ENCODE measurements at regions of chr3 and their contacts with region 1.

Region 1: GRCh38 chr3:120558771-120559241 is 37.3 kb upstream of the NDUFB4 start:
- DNase-seq: peak; percentile 88 to 95 (median 90)
- H3K4me3 ChIP-seq: peak overlapping the region; percentile 46
- H3K27ac ChIP-seq: peak overlapping the region; percentile 67 to 83
- H3K4me1 ChIP-seq: peaks cover 18% of the 10 kb centered on the region
- H3K27me3 ChIP-seq: no peaks in the 10 kb centered on the region
- CTCF ChIP-seq: peak; percentile 96 to 99 (median 97)
- EP300 ChIP-seq: no peak
- POLR2A ChIP-seq: peak; percentile 53

Region 2: GRCh38 chr3:119898478-119899191 is 660.2 kb before region 1 on chr3:
- intact Hi-C with region 1: loop called in 1 of 4 experiments (anchors 5 kb)
- DNase-seq: no peak
- H3K4me3 ChIP-seq: no peak overlapping the region
- H3K27ac ChIP-seq: no peak overlapping the region
- H3K4me1 ChIP-seq: no peaks in the 10 kb centered on the region
- H3K27me3 ChIP-seq: no peaks in the 10 kb centered on the region
- CTCF ChIP-seq: no peak
- EP300 ChIP-seq: no peak
- POLR2A ChIP-seq: no peak

Region 3: GRCh38 chr3:120239644-120240043 is 319.2 kb before region 1 on chr3:
- intact Hi-C with region 1: loop called in 3 of 4 experiments (anchors 5 to 10 kb)
- DNase-seq: no peak
- H3K4me3 ChIP-seq: no peak overlapping the region
- H3K27ac ChIP-seq: no peak overlapping the region
- H3K4me1 ChIP-seq: no peaks in the 10 kb centered on the region
- H3K27me3 ChIP-seq: no peaks in the 10 kb centered on the region
- CTCF ChIP-seq: no peak
- EP300 ChIP-seq: no peak
- POLR2A ChIP-seq: no peak

Region 4: GRCh38 chr3:120245386-120245785 is 313.4 kb before region 1 on chr3:
- intact Hi-C with region 1: loop called (anchors 5 to 10 kb)
- DNase-seq: no peak
- H3K4me3 ChIP-seq: no peak overlapping the region
- H3K27ac ChIP-seq: no peak overlapping the region
- H3K4me1 ChIP-seq: no peaks in the 10 kb centered on the region
- H3K27me3 ChIP-seq: no peaks in the 10 kb centered on the region
- CTCF ChIP-seq: no peak
- EP300 ChIP-seq: no peak
- POLR2A ChIP-seq: no peak

Region 5: DNA sequence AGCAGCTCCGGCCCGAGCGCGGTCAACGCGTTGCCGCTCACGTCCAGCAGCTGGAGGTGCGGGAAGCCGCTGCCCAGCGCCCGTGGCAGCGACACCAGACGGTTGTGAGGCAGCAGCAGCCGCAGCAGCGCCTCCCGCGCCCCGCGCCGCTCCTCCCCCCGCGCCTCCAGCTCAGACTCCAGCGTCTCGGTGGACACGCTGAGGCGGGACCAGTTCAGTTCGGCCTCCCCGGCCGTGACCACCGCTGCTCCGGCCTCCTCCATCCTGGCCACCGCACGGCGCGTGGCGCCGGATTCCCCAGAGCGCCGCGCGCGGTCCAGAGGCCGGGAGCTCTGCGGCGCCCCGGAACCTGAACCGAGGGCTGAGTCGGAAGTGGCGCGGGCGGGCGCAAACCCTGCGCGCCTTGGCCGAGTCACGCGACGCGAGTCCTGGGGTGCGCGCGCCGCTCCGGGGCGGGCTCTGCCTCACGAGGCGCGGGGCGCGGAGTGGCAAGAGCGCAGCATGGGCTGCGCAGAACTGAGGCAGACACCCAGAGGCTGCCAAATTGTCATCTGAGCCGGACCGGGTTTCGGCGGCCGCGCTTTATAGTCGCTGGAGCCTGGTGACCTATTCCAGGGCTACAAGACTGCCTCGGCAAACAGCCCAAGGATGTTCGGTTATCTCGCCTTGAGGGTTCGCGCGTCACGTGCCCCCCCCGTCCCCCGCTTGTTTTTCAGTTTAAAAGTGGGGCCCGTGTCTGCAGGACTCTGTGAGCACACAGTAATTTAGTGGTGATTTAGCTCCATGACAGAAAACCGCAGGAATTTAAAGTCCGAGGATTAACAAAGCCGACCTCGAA is 209.6 kb before region 1 on chr3 and contains the start of gene LRRC58:
- intact Hi-C with region 1: loop called in 1 of 4 experiments (anchors 5 kb)
- DNase-seq: peak; percentile 90 to 95 (median 91)
- H3K4me3 ChIP-seq: peak within 1 kb of the TSS; percentile 68
- H3K27ac ChIP-seq: peak within 1 kb of the TSS; percentile 91 to 94
- H3K4me1 ChIP-seq: peaks cover 4% of the 10 kb centered on the region
- H3K27me3 ChIP-seq: no peaks in the 10 kb centered on the region
- CTCF ChIP-seq: peak in 2 of 3 donors; percentile 34 to 52
- EP300 ChIP-seq: no peak
- POLR2A ChIP-seq: peak; percentile 89
- total RNA-seq, gene LRRC58: 25.3 to 41.8 (median 33.1) TPM

Region 6: DNA sequence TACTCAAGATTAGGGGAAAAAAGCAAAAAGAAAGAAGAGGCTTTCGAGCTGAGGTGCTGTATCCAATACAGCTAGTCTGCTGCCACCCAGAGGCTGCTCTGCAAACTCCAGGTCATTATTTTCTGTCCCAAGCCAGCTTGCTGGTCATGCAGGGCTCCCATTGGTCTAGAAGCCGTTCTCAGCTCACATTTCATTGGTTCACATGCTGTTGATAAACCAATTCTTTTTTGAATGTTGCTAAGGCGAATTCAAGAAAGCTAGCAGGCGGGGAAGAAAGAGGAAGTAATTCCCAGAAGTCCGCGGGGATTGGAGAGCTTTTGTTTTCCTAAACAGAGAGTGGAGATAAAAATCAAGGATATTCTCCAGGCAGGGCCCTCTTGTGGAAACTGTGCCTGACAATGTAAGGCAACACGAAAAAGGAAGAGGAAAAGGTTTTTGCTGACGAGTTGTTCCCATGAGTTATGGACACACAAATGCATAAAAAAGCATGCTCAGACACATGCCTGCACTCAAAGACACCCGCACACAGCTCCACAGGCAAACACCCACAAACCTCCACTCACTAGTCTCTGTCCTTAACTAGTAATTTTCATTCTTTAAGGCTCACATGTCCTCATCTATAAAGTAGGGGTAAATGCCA is 141.4 kb before region 1 on chr3:
- intact Hi-C with region 1: loop called in 3 of 4 experiments (anchors 5 to 10 kb)
- DNase-seq: peak; percentile 83 to 94 (median 89)
- H3K4me3 ChIP-seq: peak overlapping the region; percentile 4
- H3K27ac ChIP-seq: no peak overlapping the region
- H3K4me1 ChIP-seq: peaks cover 15% of the 10 kb centered on the region
- H3K27me3 ChIP-seq: no peaks in the 10 kb centered on the region
- CTCF ChIP-seq: peak; percentile 85 to 91 (median 88)
- EP300 ChIP-seq: no peak
- POLR2A ChIP-seq: no peak

Region 7: GRCh38 chr3:120742198-120742849 is 183.5 kb after region 1 on chr3 and contains the starts of genes GTF2E1 and RABL3:
- intact Hi-C with region 1: loop called in 1 of 4 experiments (anchors 10 kb)
- DNase-seq: peak; percentile 94 to 98 (median 97)
- H3K4me3 ChIP-seq: peak within 1 kb of the TSS; percentile 90
- H3K27ac ChIP-seq: peak within 1 kb of the TSS; percentile 84 to 85
- H3K4me1 ChIP-seq: peaks cover 7% of the 10 kb centered on the region
- H3K27me3 ChIP-seq: no peaks in the 10 kb centered on the region
- CTCF ChIP-seq: no peak
- EP300 ChIP-seq: no peak
- POLR2A ChIP-seq: peak; percentile 49
- total RNA-seq, gene GTF2E1: 4.5 to 20.3 (median 11.7) TPM
- total RNA-seq, gene RABL3: 11.1 to 36.1 (median 26.6) TPM

Measured in ovary (tissue), 10 donors.